ENCODE measurements at regions of chr5 and their contacts with region 1.

Region 1: GRCh38 chr5:141040771-141041426 is 10.3 kb upstream of the PCDHB1 start:
- DNase-seq: peak; percentile 98
- H3K4me3 Mint-ChIP-seq: no peak overlapping the region
- H3K27ac Mint-ChIP-seq: no peak overlapping the region
- H3K4me1 Mint-ChIP-seq: no peaks in the 10 kb centered on the region
- H3K27me3 Mint-ChIP-seq: peaks cover 31% of the 10 kb centered on the region
- CTCF ChIP-seq: peak; percentile 89

Region 2: DNA sequence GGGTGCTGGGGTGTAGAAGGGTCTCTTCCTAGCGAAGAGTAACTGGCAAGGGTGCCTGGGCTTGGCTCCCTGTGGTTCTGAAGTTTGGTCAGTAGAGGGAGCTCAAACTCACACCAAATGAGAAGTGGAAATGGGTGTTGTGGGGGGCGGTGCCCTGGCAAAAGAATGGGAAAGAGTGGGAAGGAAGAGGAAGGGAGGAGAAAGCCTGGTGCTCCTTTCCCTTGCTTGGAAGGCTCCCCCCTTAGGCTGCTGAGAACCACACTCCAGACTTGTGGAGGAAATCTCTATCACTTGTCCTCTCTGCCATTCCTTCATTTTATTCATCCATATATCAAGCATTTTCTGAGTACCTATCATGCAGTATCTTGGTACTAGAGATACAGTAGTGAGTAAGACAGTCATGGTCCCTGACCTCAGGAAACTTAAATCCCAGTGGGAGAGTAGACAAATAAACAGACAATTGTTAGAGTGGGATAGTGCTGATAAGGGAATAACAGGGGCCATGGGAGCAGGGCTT is 667.9 kb before region 1 on chr5:
- CTCF ChIA-PET with region 1: interaction called, 3 read pairs
- POLR2A ChIA-PET with region 1: no interaction called
- intact Hi-C with region 1: loop called (anchors 5 kb)
- DNase-seq: peak; percentile 90
- H3K4me3 Mint-ChIP-seq: no peak overlapping the region
- H3K27ac Mint-ChIP-seq: no peak overlapping the region
- H3K4me1 Mint-ChIP-seq: peaks cover 8% of the 10 kb centered on the region
- H3K27me3 Mint-ChIP-seq: no peaks in the 10 kb centered on the region
- CTCF ChIP-seq: peak; percentile 97

Region 3: DNA sequence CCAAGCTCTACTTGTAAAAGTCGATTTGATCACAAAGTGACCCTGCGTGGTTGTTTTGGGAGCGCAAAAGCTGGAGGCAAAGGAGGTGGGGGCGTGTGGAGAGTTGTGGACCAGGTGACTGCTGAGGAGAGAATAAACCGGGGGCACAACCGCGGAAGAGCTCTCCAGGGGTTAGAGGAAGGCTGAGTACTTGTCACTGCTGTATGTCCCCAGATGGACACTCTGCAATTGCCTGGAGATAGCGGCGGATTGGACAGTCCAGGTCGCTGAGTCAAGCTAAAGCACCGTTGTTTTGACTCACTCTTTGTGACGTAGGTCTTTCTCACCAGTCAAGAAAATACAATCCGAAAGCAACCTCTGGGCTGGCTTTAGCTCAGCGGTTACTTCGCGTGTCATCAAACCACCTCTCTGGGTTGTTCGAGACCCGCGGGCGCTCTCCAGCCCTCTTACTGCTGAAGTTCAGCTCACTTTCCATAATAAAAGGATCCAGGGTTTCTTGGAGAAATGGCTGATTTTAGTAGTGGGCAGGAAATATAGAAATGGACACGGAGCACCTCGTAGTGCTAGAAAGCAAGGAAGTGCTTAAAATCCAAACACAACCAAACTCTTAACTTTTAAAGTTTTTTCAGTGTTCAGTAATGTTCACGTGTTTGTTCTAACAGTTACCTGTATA is 315.0 kb before region 1 on chr5:
- CTCF ChIA-PET with region 1: interaction called, 7 read pairs
- POLR2A ChIA-PET with region 1: interaction called, 26 read pairs
- intact Hi-C with region 1: loop called (anchors 1 kb)
- DNase-seq: peak; percentile 99
- H3K4me3 Mint-ChIP-seq: peak overlapping the region; percentile 72
- H3K27ac Mint-ChIP-seq: peak overlapping the region; percentile 42
- H3K4me1 Mint-ChIP-seq: peaks cover 6% of the 10 kb centered on the region
- H3K27me3 Mint-ChIP-seq: no peaks in the 10 kb centered on the region
- CTCF ChIP-seq: no peak

Region 4: GRCh38 chr5:140827704-140828361 is 213.1 kb before region 1 on chr5 and contains the start of gene PCDHA6:
- CTCF ChIA-PET with region 1: interaction called, 27 read pairs
- POLR2A ChIA-PET with region 1: interaction called, 19 read pairs
- intact Hi-C with region 1: loop called (anchors 1 kb)
- DNase-seq: peak; percentile 48
- H3K4me3 Mint-ChIP-seq: peak within 1 kb of the TSS; percentile 81
- H3K27ac Mint-ChIP-seq: no peak within 1 kb of the TSS
- H3K4me1 Mint-ChIP-seq: no peaks in the 10 kb centered on the region
- H3K27me3 Mint-ChIP-seq: no peaks in the 10 kb centered on the region
- CTCF ChIP-seq: peak; percentile 37
- total RNA-seq, gene PCDHA6: 1.0 and 1.5 TPM in 2 replicates

Region 5: GRCh38 chr5:140875066-140876065 is 165.5 kb before region 1 on chr5 and contains the start of gene PCDHA12:
- CTCF ChIA-PET with region 1: interaction called, 121 read pairs
- POLR2A ChIA-PET with region 1: interaction called, 179 read pairs
- intact Hi-C with region 1: loop called (anchors 1 kb)
- DNase-seq: peak; percentile 76
- H3K4me3 Mint-ChIP-seq: peak within 1 kb of the TSS; percentile 86
- H3K27ac Mint-ChIP-seq: peak within 1 kb of the TSS; percentile 92
- H3K4me1 Mint-ChIP-seq: peaks cover 4% of the 10 kb centered on the region
- H3K27me3 Mint-ChIP-seq: no peaks in the 10 kb centered on the region
- CTCF ChIP-seq: peak; percentile 68
- total RNA-seq, gene PCDHA12: 6.1 and 9.6 TPM in 2 replicates

Region 6: GRCh38 chr5:140953234-140953633 is 87.7 kb before region 1 on chr5:
- CTCF ChIA-PET with region 1: interaction called, 6 read pairs
- POLR2A ChIA-PET with region 1: interaction called, 35 read pairs
- intact Hi-C with region 1: no loop called
- DNase-seq: no peak
- H3K4me3 Mint-ChIP-seq: no peak overlapping the region
- H3K27ac Mint-ChIP-seq: no peak overlapping the region
- H3K4me1 Mint-ChIP-seq: peaks cover 20% of the 10 kb centered on the region
- H3K27me3 Mint-ChIP-seq: no peaks in the 10 kb centered on the region
- CTCF ChIP-seq: no peak

Region 7: GRCh38 chr5:141001854-141002604 is 38.9 kb before region 1 on chr5:
- CTCF ChIA-PET with region 1: interaction called, 44 read pairs
- POLR2A ChIA-PET with region 1: interaction called, 122 read pairs
- intact Hi-C with region 1: loop called (anchors 1 kb)
- DNase-seq: peak; percentile 56
- H3K4me3 Mint-ChIP-seq: peak overlapping the region; percentile 74
- H3K27ac Mint-ChIP-seq: peak overlapping the region; percentile 94
- H3K4me1 Mint-ChIP-seq: peaks cover 30% of the 10 kb centered on the region
- H3K27me3 Mint-ChIP-seq: no peaks in the 10 kb centered on the region
- CTCF ChIP-seq: no peak

Measured in MCF 10A (cell line).